Activated CD8-positive, alpha-beta memory T cell treated with anti-CD3 and anti-CD28 coated beads, Interleukin-2, amount 10 ng/mL, durations not matched to agents 7 days and 5 days (primary cell): ENCODE measurements at regions of chr15 and their contacts with region 1.

Region 1: DNA sequence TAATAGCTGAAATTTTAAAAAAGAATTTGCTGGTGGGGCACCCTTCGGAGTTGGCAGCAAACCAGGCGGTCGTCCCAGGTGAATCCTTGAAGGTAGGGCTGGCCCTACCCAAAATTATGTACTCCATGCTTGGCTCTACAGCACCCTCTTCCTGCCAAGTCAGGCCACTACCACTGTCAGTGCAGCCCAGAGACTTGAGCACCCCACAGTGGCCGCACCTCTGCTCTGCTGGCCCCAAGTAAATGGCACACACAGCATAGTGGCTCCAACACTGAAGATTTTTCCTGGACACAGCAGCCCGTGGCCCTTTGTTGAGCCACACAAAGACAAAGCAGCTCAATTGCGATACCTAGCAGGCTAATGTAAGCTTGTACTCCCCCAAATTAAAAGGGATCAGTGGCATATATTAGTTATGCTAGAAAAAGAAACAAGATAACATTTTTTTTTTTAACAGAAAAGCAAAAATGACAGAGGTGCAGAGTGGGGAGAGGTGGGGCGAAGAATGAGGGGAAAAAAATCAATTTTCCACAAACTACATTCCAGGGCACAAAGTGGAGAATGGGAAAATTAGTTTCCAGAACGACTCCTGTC is 250.5 kb downstream of the UACA start:
- DNase-seq: peak; percentile 84
- ATAC-seq: peak; percentile 91
- H3K4me3 Mint-ChIP-seq: no peak overlapping the region
- H3K27ac Mint-ChIP-seq: no peak overlapping the region
- H3K4me1 Mint-ChIP-seq: peaks cover 30% of the 10 kb centered on the region
- H3K27me3 Mint-ChIP-seq: peaks cover 57% of the 10 kb centered on the region

Region 2: DNA sequence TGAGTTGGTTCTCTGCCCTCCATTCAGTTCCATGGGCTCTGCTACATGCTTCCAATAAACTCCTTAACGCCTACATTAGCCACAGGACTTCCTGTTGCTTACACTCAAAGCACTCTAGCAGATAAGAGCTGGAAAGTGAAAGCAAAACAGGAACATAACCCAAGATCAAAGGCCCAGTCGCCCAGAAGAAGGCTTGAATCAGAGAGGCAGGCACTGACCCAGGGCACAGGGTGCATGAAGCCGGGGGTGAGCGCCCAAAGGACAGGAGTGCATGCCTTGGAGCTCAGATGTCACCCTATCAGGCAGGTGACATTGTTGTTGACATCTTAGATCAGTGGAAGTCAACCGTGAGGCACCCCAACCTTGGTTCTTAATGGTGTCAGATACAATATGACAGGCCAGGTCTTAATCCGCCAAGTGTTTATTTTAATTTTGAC is 15.4 kb after region 1 on chr15:
- CTCF ChIA-PET with region 1: interaction called, 21 read pairs
- DNase-seq: peak; percentile 76
- ATAC-seq: peak; percentile 95
- H3K4me3 Mint-ChIP-seq: peak overlapping the region; percentile 63
- H3K27ac Mint-ChIP-seq: peak overlapping the region; percentile 92
- H3K4me1 Mint-ChIP-seq: peaks cover 39% of the 10 kb centered on the region
- H3K27me3 Mint-ChIP-seq: peaks cover 18% of the 10 kb centered on the region

Region 3: GRCh38 chr15:70535071-70535954 is 22.4 kb after region 1 on chr15:
- CTCF ChIA-PET with region 1: interaction called, 13 read pairs
- DNase-seq: peak; percentile 89
- ATAC-seq: peak; percentile 87
- H3K4me3 Mint-ChIP-seq: peak overlapping the region; percentile 71
- H3K27ac Mint-ChIP-seq: peak overlapping the region; percentile 89
- H3K4me1 Mint-ChIP-seq: peaks cover 32% of the 10 kb centered on the region
- H3K27me3 Mint-ChIP-seq: peaks cover 31% of the 10 kb centered on the region